ENCODE measurements at regions of chr16 and their contacts with region 1.

Region 1: GRCh38 chr16:3520413-3520812 is 19.6 kb downstream of the CLUAP1 start:
- DNase-seq: no peak
- H3K4me3 Mint-ChIP-seq: no peak overlapping the region
- H3K27ac Mint-ChIP-seq: no peak overlapping the region
- H3K4me1 Mint-ChIP-seq: no peaks in the 10 kb centered on the region
- H3K27me3 Mint-ChIP-seq: no peaks in the 10 kb centered on the region

Region 2: GRCh38 chr16:3509470-3509928 is 10.9 kb before region 1 on chr16:
- CTCF ChIA-PET with region 1: no interaction called
- POLR2A ChIA-PET with region 1: interaction called, 10 read pairs
- DNase-seq: peak; percentile 81
- H3K4me3 Mint-ChIP-seq: peak overlapping the region; percentile 21
- H3K27ac Mint-ChIP-seq: peak overlapping the region; percentile 80
- H3K4me1 Mint-ChIP-seq: peaks cover 70% of the 10 kb centered on the region
- H3K27me3 Mint-ChIP-seq: no peaks in the 10 kb centered on the region

Region 3: DNA sequence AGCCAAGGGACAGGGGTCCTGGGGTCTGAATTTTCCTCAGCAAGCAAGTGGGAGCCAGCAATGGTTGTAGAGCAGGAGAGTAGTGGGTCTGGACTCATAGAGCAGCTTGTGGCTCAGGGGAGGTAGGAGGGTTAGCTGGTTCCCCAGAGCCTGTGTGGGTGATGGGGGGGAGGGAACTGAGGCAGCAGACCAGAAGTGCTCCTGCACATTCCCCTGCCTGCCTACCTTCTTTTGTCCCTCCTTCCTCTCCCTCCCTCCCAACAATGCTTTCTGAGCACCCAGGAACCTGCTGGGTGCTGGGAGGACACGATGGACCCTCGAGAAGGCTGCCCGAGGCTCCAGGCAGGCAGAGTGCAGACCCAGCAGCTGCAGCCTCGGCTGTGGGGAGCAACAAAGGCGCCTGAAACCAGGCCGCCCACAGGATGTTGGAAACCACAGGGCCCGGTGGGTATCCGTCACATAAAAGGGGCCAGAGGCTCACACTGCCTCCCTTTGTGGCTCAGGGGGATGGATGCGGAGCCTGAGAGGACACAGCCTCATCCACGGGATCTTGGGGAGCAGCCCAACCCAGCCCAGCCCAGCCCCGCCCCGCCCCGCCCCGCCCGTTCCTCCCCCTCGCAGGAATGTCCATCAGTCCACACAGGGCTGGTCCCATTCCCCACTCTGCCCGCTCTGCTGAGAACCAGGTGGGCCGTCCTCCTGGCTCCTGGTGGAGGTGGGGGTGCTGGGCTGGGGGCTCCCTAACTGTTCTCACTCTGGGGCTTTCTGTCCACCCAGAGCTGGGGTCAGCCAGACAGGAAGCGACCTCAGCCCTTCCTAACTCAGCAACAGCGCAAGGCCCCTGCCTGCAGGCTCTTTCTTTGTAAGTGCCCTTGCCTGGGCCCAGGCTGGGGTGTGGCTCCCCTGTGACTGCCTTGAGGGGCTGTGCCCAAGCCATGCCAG is 58.5 kb after region 1 on chr16:
- CTCF ChIA-PET with region 1: no interaction called
- POLR2A ChIA-PET with region 1: no interaction called
- DNase-seq: peak; percentile 87
- H3K4me3 Mint-ChIP-seq: peak overlapping the region; percentile 99
- H3K27ac Mint-ChIP-seq: peak overlapping the region; percentile 99
- H3K4me1 Mint-ChIP-seq: peaks cover 58% of the 10 kb centered on the region
- H3K27me3 Mint-ChIP-seq: no peaks in the 10 kb centered on the region